Activated T-helper 2 cell treated with anti-CD3 and anti-CD28 coated beads, Interferon-gamma antibody, Interleukin-2, Interleukin-4, amounts not matched to agents 10 μg/mL and 5 μg/mL and 100 μg/mL, durations not matched to agents 14 hours and 24 hours and 36 hours (primary cell): ENCODE measurements at regions of chr12 and their contacts with region 1.

Region 1: GRCh38 chr12:43882578-43883178 is 46.8 kb downstream of the TMEM117 start:
- DNase-seq: no peak
- H3K4me3 Mint-ChIP-seq: no peak overlapping the region
- H3K27ac Mint-ChIP-seq: no peak overlapping the region
- H3K4me1 Mint-ChIP-seq: no peaks in the 10 kb centered on the region
- H3K27me3 Mint-ChIP-seq: no peaks in the 10 kb centered on the region

Region 2: GRCh38 chr12:43444940-43445564 is 437.6 kb before region 1 on chr12:
- intact Hi-C with region 1: loop called (anchors 1 kb)
- DNase-seq: peak; percentile 11
- H3K4me3 Mint-ChIP-seq: no peak overlapping the region
- H3K27ac Mint-ChIP-seq: no peak overlapping the region
- H3K4me1 Mint-ChIP-seq: no peaks in the 10 kb centered on the region
- H3K27me3 Mint-ChIP-seq: no peaks in the 10 kb centered on the region

Region 3: DNA sequence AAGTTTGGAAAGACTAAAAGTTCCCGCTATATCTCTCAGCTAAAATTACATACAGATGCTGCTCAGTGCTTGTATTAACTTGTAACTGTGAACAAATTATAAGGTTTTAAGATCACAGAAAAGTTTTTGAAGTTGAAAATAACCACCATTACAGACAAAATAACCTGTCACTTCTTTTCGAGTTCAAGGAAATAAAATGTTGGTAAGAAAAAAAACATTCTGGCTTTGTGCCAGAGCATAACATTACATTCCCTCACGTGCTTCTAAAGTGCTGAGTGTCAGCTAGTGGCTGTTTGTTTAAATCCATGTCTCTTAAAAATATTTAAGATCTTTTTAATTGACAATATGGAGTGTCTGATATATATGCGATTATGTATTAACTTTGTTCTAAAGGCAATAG is 303.5 kb before region 1 on chr12:
- intact Hi-C with region 1: no loop called
- DNase-seq: no peak
- H3K4me3 Mint-ChIP-seq: no peak overlapping the region
- H3K27ac Mint-ChIP-seq: no peak overlapping the region
- H3K4me1 Mint-ChIP-seq: no peaks in the 10 kb centered on the region
- H3K27me3 Mint-ChIP-seq: no peaks in the 10 kb centered on the region

Region 4: DNA sequence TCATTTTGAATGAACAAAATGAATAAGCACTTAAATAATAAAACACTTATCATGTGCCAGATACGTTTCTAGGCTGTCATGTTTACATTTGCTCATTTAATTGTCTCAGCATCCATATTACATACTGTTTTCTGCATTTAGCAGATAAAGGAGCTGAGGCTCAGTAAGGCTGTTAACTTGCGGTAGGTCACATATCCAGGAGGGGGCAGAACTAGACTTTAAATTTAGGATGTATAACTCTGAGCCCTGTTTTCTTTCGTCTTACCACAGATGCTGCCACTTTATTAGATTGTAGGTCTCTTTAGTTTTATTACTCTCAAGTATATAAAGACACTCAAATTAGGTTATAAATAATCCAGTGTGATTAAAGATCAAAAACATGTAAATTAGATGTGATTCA is 106.2 kb before region 1 on chr12:
- intact Hi-C with region 1: loop called (anchors 1 kb)
- DNase-seq: no peak
- H3K4me3 Mint-ChIP-seq: no peak overlapping the region
- H3K27ac Mint-ChIP-seq: no peak overlapping the region
- H3K4me1 Mint-ChIP-seq: no peaks in the 10 kb centered on the region
- H3K27me3 Mint-ChIP-seq: no peaks in the 10 kb centered on the region

Region 5: DNA sequence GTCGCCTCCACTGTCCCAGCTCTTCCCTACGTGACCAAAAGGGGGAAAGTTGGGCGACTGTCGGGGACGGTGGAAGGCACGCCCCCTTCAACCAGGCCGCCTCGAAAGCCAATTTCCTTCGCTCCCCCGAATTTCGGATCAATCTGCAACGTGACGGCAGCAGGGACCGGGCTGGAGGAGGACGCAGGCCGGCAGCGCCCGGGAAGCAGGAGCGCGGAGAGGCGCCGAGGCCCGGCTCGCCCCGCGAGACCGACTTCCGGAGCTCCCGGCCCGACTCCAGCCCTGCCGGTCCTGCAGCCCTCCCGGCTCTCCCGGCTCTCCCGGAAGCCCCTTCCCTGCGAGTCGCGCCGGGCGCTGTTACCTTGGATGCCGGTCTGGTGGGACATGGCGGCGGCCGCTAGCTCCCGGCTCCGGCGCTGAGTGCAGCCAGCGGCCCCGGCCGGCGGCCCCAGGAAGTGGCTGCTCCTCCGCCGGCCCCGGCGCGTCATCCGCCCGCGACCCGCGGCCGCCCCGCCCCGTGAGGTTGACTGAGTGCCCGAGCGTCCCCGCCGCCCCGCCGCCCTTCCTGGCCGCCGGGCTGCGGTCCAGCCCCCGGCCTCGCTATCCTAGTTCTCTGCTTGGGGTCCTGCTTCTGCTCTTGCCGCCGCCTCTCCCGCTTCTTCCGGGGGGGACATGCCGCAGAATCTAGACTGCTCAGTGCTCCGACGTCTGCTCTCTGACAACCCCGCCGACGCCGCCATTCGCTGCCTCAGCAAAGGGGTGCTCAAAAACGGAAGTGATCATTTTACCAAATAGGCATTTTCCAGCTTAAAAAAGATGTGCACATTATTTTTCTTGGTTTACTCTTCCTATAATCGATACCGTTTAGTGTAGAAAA is 76.6 kb before region 1 on chr12 and contains the start of gene TWF1:
- intact Hi-C with region 1: loop called (anchors 1 kb)
- DNase-seq: peak; percentile 84
- H3K4me3 Mint-ChIP-seq: peak within 1 kb of the TSS; percentile 100
- H3K27ac Mint-ChIP-seq: peak within 1 kb of the TSS; percentile 100
- H3K4me1 Mint-ChIP-seq: peaks cover 25% of the 10 kb centered on the region
- H3K27me3 Mint-ChIP-seq: peaks cover 6% of the 10 kb centered on the region
- total RNA-seq, gene TWF1: 21.6 and 22.3 TPM in 2 replicates

Region 6: GRCh38 chr12:43848786-43849185 is 33.9 kb before region 1 on chr12:
- intact Hi-C with region 1: no loop called
- DNase-seq: no peak
- H3K4me3 Mint-ChIP-seq: no peak overlapping the region
- H3K27ac Mint-ChIP-seq: no peak overlapping the region
- H3K4me1 Mint-ChIP-seq: peaks cover 16% of the 10 kb centered on the region
- H3K27me3 Mint-ChIP-seq: peaks cover 2% of the 10 kb centered on the region